Calu3 (cell line): ENCODE measurements at regions of chr13 and their contacts with region 1.

Region 1: DNA sequence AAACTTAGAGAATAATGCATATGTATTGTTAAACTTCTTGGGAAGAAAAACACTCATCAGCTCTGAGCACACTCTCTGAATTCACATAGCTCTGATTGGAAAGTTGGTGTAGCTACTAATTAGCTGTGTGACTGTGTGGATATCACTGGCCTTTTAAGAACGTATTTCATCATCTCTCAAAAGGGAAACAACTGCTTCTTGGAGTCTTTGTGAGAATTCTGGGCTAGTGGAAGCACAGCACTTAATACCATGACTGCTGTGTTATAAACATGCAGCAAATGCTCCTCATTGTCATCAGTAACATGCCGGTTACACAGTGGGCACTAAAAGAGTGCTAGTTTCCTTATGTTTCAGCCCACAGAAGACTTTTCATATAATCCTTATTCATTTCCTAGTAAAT is 220.9 kb upstream of the CSNK1A1L start:
- DNase-seq: no peak
- H3K4me3 Mint-ChIP-seq: no peak overlapping the region
- H3K27ac Mint-ChIP-seq: no peak overlapping the region
- H3K4me1 Mint-ChIP-seq: peaks cover 12% of the 10 kb centered on the region
- H3K27me3 Mint-ChIP-seq: no peaks in the 10 kb centered on the region
- CTCF ChIP-seq: no peak

Region 2: GRCh38 chr13:37561031-37561430 is 234.7 kb after region 1 on chr13:
- CTCF ChIA-PET with region 1: no interaction called
- intact Hi-C with region 1: loop called (anchors 10 kb)
- DNase-seq: no peak
- H3K4me3 Mint-ChIP-seq: no peak overlapping the region
- H3K27ac Mint-ChIP-seq: no peak overlapping the region
- H3K4me1 Mint-ChIP-seq: no peaks in the 10 kb centered on the region
- H3K27me3 Mint-ChIP-seq: no peaks in the 10 kb centered on the region
- CTCF ChIP-seq: no peak